ENCODE measurements at regions of chr16 and their contacts with region 1.

Region 1: GRCh38 chr16:4734063-4734729 is at the starts of genes ANKS3 and DNAAF8:
- DNase-seq: peak; percentile 97
- H3K4me3 ChIP-seq: peak within 1 kb of the TSS; percentile 97
- H3K27ac ChIP-seq: peak within 1 kb of the TSS; percentile 88 to 96
- H3K4me1 ChIP-seq: peaks cover 0 to 6% of the 10 kb centered on the region in 2 experiments; a peak in 1 of 4 replicates
- H3K27me3 ChIP-seq: no peaks in the 10 kb centered on the region
- CTCF ChIP-seq: no peak
- EP300 ChIP-seq: no peak
- RAD21 ChIP-seq: no peak
- polyA plus RNA-seq, gene ANKS3: 42.2 and 43.9 TPM in 2 replicates
- polyA plus RNA-seq, gene DNAAF8: 2.4 and 3.1 TPM in 2 replicates

Region 2: DNA sequence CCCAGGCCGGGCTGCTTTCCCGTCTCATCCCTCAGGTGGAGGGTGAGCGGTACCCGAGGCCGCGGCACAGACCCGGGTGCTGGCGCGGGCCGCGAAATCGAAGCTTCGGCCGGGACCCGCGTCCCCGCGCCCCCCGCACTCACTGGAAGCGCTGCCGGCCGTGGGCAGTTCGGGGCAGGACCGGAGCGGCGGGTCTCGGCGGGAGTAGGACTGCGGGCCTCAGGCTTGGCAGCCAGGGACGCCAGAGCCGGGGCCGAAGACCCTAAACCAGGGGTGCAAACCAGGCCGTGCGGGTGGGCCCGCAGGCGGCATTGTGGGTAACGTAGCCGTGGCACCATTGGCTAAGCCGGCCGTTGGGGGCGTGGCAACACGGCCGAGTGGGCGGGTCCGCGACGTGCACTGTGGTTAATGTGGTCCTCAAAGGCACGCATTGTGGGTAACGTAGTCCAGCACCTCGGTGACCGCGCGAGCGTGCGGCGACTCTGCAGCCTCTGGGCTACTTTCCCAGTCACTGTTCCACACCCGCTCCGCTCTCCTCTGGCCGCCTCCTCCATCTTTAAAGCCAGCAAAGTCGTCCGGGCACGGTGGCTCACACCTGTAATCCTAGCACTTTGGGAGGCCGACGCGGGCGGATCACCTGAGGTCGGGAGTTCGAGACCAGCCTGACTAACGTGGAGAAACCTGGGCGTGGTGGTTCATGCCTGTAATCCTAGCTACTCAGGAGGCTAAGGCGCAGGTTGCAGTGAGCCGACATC is 32.9 kb after region 1 on chr16 and contains the start of gene ZNF500:
- CTCF ChIA-PET with region 1: no interaction called
- POLR2A ChIA-PET with region 1: interaction called, 16 read pairs
- DNase-seq: peak; percentile 97
- H3K4me3 ChIP-seq: peak within 1 kb of the TSS; percentile 71 to 94
- H3K27ac ChIP-seq: peak within 1 kb of the TSS; percentile 54 to 79
- H3K4me1 ChIP-seq: peaks cover 5 to 20% of the 10 kb centered on the region in 2 experiments; a peak in 2 of 4 replicates
- H3K27me3 ChIP-seq: no peaks in the 10 kb centered on the region
- CTCF ChIP-seq: no peak
- EP300 ChIP-seq: no peak
- RAD21 ChIP-seq: no peak
- polyA plus RNA-seq, gene ZNF500: 6.3 and 8.2 TPM in 2 replicates